Naive thymus-derived CD4-positive, alpha-beta T cell (primary cell): ENCODE measurements at regions of chr12 and their contacts with region 1.

Region 1: GRCh38 chr12:118372541-118373495 is at the start of gene TAOK3:
- DNase-seq: peak; percentile 90 to 98 (median 96)
- ATAC-seq: peak; percentile 95
- H3K4me3 ChIP-seq: peak within 1 kb of the TSS; percentile 93
- H3K4me3 Mint-ChIP-seq: peak within 1 kb of the TSS; percentile 90 to 99 (median 93)
- H3K27ac ChIP-seq: peak within 1 kb of the TSS; percentile 78
- H3K27ac Mint-ChIP-seq: peak within 1 kb of the TSS; percentile 86 to 99 (median 93)
- H3K4me1 ChIP-seq: peaks cover 26 to 27% of the 10 kb centered on the region in 2 donors
- H3K4me1 Mint-ChIP-seq: peaks cover 34 to 63% (median 51%) of the 10 kb centered on the region in 7 donors
- H3K27me3 ChIP-seq: no peaks in the 10 kb centered on the region
- H3K27me3 Mint-ChIP-seq: peaks cover 0 to 16% (median 0%) of the 10 kb centered on the region in 5 donors
- total RNA-seq, gene TAOK3: 55.2 to 102 (median 67.3) TPM

Region 2: DNA sequence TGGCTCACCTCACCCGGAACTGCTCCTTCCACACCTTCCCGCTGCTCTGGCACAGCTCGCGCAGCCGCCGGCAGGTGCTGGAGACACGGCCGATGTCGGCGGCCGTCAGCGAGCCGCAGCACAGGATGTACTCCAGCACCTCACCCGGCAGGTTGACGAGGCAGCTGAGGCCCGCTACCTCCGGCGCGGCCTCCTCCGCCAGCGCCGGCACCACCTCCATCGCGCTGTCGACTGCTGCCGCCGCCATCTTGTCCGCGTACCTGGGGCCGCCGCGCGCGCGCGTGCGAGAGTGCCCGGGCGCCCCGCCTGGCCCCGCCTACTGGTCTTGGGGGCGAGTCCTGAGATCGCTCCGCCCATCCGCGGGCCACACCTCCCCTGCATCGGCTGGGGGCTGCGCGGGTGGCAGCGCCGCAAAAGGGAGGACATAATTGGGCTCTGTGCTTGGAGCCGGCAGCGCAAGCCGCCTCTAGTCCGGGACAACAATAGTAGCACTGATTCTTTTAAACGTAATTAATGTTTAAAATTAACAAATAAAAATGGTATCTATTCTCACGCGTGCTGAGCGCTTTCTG is 1182.5 kb before region 1 on chr12 and contains the start of gene FBXO21:
- CTCF ChIA-PET with region 1: no interaction called
- POLR2A ChIA-PET with region 1: no interaction called
- intact Hi-C with region 1: loop called in 1 of 2 experiments (anchors 10 kb)
- DNase-seq: peak; percentile 92 to 98 (median 95)
- ATAC-seq: peak; percentile 99
- H3K4me3 ChIP-seq: peak within 1 kb of the TSS; percentile 65
- H3K4me3 Mint-ChIP-seq: peak within 1 kb of the TSS; percentile 93 to 97 (median 95)
- H3K27ac ChIP-seq: peak within 1 kb of the TSS; percentile 77
- H3K27ac Mint-ChIP-seq: peak within 1 kb of the TSS; percentile 85 to 95 (median 93)
- H3K4me1 ChIP-seq: peaks cover 8 to 11% of the 10 kb centered on the region in 2 donors
- H3K4me1 Mint-ChIP-seq: peaks cover 13 to 52% (median 34%) of the 10 kb centered on the region in 7 donors
- H3K27me3 ChIP-seq: no peaks in the 10 kb centered on the region
- H3K27me3 Mint-ChIP-seq: peaks cover 0 to 12% (median 0%) of the 10 kb centered on the region in 5 donors
- total RNA-seq, gene FBXO21: 30.4 to 62.9 (median 48.6) TPM

Region 3: GRCh38 chr12:118120579-118121363 is 252.0 kb before region 1 on chr12:
- CTCF ChIA-PET with region 1: interaction called, 11 read pairs
- POLR2A ChIA-PET with region 1: interaction called, 7 read pairs
- intact Hi-C with region 1: loop called (anchors 1 kb)
- DNase-seq: peak in 8 of 9 donors; percentile 12 to 50 (median 34)
- ATAC-seq: peak; percentile 76
- H3K4me3 ChIP-seq: no peak overlapping the region
- H3K4me3 Mint-ChIP-seq: no peak overlapping the region
- H3K27ac ChIP-seq: no peak overlapping the region
- H3K27ac Mint-ChIP-seq: peak overlapping the region in 7 of 9 donors; percentile 51 to 71 (median 62)
- H3K4me1 ChIP-seq: peaks cover 0 to 3% of the 10 kb centered on the region in 2 donors
- H3K4me1 Mint-ChIP-seq: peaks cover 4 to 12% (median 8%) of the 10 kb centered on the region in 7 donors
- H3K27me3 ChIP-seq: no peaks in the 10 kb centered on the region
- H3K27me3 Mint-ChIP-seq: no peaks in the 10 kb centered on the region

Region 4: DNA sequence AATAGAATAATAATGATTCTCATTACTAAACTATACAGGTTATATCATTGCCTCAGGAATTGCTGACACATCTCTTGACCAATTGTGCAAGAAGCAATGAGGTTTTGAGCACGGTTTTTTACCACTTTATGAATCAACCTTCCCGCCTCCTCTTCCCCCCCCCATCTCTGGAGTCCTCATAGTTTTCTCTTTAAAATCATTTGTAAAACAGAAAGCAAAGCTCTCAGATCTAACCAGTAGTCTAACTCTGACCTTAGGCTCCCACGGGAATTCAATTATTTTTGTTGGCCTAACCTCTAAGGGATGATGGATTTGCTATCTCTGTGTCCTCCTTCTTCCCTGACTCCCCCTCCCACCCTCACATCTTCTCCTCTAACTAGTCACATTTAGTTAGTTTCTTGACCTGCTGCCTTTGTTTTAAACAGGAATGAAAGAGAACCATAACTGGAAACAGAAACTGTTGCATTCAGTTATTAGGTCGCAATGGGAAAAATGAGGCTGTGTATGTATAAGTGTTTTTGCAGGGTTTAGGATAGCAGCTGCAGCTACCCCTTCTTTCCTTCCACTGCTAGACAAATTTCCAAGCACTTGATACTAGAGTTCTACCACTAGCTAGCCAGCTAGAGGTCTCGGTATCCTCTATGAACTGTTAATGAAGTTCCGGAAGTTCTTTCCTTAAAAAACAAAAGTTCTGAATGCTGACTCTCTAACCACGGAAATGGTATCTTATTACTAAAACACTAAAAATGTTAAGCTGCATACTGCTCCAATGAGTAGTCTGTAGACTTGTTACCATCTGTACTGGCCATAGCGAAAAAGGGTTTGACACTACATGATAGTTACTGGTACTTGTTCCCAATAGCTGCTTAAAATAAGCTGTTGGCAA is 65.5 kb before region 1 on chr12:
- CTCF ChIA-PET with region 1: interaction called, 11 read pairs
- POLR2A ChIA-PET with region 1: no interaction called
- intact Hi-C with region 1: loop called in 1 of 2 experiments (anchors 5 kb)
- DNase-seq: peak in 1 of 9 donors; percentile 38
- ATAC-seq: peak; percentile 56
- H3K4me3 ChIP-seq: no peak overlapping the region
- H3K4me3 Mint-ChIP-seq: peak overlapping the region in 7 of 10 donors; percentile 0 to 46 (median 25)
- H3K27ac ChIP-seq: no peak overlapping the region
- H3K27ac Mint-ChIP-seq: peak overlapping the region in 4 of 9 donors; percentile 19 to 68 (median 51)
- H3K4me1 ChIP-seq: peaks cover 6 to 17% of the 10 kb centered on the region in 2 donors
- H3K4me1 Mint-ChIP-seq: peaks cover 23 to 61% (median 51%) of the 10 kb centered on the region in 7 donors
- H3K27me3 ChIP-seq: no peaks in the 10 kb centered on the region
- H3K27me3 Mint-ChIP-seq: no peaks in the 10 kb centered on the region

Region 5: GRCh38 chr12:118432812-118433545 is 60.2 kb after region 1 on chr12:
- CTCF ChIA-PET with region 1: no interaction called
- POLR2A ChIA-PET with region 1: no interaction called
- intact Hi-C with region 1: no loop called
- DNase-seq: no peak
- ATAC-seq: no peak
- H3K4me3 ChIP-seq: no peak overlapping the region
- H3K4me3 Mint-ChIP-seq: no peak overlapping the region
- H3K27ac ChIP-seq: no peak overlapping the region
- H3K27ac Mint-ChIP-seq: no peak overlapping the region
- H3K4me1 ChIP-seq: no peaks in the 10 kb centered on the region
- H3K4me1 Mint-ChIP-seq: no peaks in the 10 kb centered on the region
- H3K27me3 ChIP-seq: no peaks in the 10 kb centered on the region
- H3K27me3 Mint-ChIP-seq: peaks cover 0 to 2% (median 0%) of the 10 kb centered on the region in 5 donors

Region 6: GRCh38 chr12:119667577-119668323 is 1294.9 kb after region 1 on chr12 and contains the start of gene PRKAB1:
- CTCF ChIA-PET with region 1: no interaction called
- POLR2A ChIA-PET with region 1: interaction called, 9 read pairs
- intact Hi-C with region 1: loop called (anchors 1 to 5 kb)
- DNase-seq: peak; percentile 91 to 96 (median 93)
- ATAC-seq: peak; percentile 96
- H3K4me3 ChIP-seq: peak within 1 kb of the TSS; percentile 81
- H3K4me3 Mint-ChIP-seq: peak within 1 kb of the TSS; percentile 85 to 98 (median 88)
- H3K27ac ChIP-seq: peak within 1 kb of the TSS; percentile 76
- H3K27ac Mint-ChIP-seq: peak within 1 kb of the TSS; percentile 77 to 96 (median 92)
- H3K4me1 ChIP-seq: peaks cover 20 to 30% of the 10 kb centered on the region in 2 donors
- H3K4me1 Mint-ChIP-seq: peaks cover 27 to 63% (median 55%) of the 10 kb centered on the region in 7 donors
- H3K27me3 ChIP-seq: no peaks in the 10 kb centered on the region
- H3K27me3 Mint-ChIP-seq: no peaks in the 10 kb centered on the region
- total RNA-seq, gene PRKAB1: 23.5 to 48.7 (median 43.3) TPM

Region 7: DNA sequence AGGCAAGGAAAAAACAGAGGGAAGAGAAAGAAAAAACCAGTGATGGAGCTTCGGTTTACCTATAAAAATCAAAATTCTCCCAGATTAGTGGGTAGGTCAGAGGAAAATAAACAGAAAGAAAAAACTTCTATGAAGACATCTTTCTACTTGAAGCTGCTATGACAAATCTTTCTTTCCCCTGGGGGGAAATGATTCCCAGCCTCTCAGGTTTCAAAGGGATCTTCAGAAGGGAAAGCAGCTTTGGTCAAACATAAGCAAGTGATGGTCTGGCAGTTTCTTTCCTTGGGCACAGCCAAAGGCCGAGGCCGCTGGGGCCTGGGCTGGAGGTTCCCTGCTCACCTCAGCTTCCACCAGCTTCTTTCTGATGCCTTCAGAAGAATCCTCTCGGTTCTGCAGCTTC is 1399.6 kb after region 1 on chr12:
- CTCF ChIA-PET with region 1: no interaction called
- POLR2A ChIA-PET with region 1: no interaction called
- intact Hi-C with region 1: no loop called
- DNase-seq: no peak
- ATAC-seq: no peak
- H3K4me3 ChIP-seq: no peak overlapping the region
- H3K4me3 Mint-ChIP-seq: no peak overlapping the region
- H3K27ac ChIP-seq: no peak overlapping the region
- H3K27ac Mint-ChIP-seq: no peak overlapping the region
- H3K4me1 ChIP-seq: no peaks in the 10 kb centered on the region
- H3K4me1 Mint-ChIP-seq: no peaks in the 10 kb centered on the region
- H3K27me3 ChIP-seq: no peaks in the 10 kb centered on the region
- H3K27me3 Mint-ChIP-seq: no peaks in the 10 kb centered on the region